SK-N-SH (cell line): ENCODE measurements at regions of chr9 and their contacts with region 1.

Region 1: GRCh38 chr9:113682297-113682771 is 193.8 kb upstream of the ZNF618 start:
- DNase-seq: peak; percentile 68
- H3K4me3 ChIP-seq: no peak overlapping the region; a peak in 1 of 4 replicates
- H3K27ac ChIP-seq: no peak overlapping the region
- H3K4me1 ChIP-seq: peaks cover 0 to 2% of the 10 kb centered on the region in 2 experiments; a peak in 1 of 4 replicates
- H3K27me3 ChIP-seq: peaks cover 8% of the 10 kb centered on the region; the same call in 1 of the 2 replicates
- CTCF ChIP-seq: peak; percentile 91
- EP300 ChIP-seq: no peak
- RAD21 ChIP-seq: peak; percentile 71

Region 2: GRCh38 chr9:113548221-113549041 is 133.9 kb before region 1 on chr9:
- CTCF ChIA-PET with region 1: no interaction called
- POLR2A ChIA-PET with region 1: no interaction called
- DNase-seq: no peak
- H3K4me3 ChIP-seq: no peak overlapping the region
- H3K27ac ChIP-seq: peak overlapping the region in 1 of 2 experiments; percentile 2; a peak in 1 of 4 replicates
- H3K4me1 ChIP-seq: peaks cover 0 to 25% of the 10 kb centered on the region in 2 experiments; a peak in 1 of 4 replicates
- H3K27me3 ChIP-seq: no peaks in the 10 kb centered on the region
- CTCF ChIP-seq: no peak
- EP300 ChIP-seq: no peak
- RAD21 ChIP-seq: no peak

Region 3: DNA sequence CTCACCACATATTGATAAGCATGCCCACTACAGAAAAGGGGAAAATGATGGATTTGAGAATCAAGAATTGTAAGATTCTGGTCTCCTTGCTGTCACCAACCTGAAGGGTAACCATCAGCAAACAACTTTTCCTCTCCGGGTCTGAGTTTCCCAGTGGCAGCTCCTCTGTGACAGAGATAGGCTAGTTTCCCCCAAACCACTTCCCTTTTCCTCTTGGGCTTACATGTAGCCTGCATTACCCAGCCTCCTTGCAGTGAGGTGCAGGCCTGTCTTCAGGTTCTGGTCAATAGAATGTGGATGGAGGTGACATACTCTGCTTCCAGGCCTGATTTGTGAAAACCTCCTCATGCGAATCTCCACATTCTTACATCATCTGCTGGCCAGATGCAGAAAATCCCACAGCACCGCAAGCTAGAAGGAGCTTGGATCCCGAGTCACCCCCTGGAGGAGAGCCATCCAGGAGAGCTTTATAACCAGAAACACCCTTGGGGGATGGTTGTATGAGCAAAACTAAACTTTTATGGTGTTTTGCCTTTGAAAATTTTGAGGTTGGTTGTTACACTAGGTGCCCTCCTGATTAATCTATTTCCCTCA is 12.7 kb before region 1 on chr9:
- CTCF ChIA-PET with region 1: interaction called, 16 read pairs
- POLR2A ChIA-PET with region 1: no interaction called
- DNase-seq: no peak
- H3K4me3 ChIP-seq: no peak overlapping the region
- H3K27ac ChIP-seq: no peak overlapping the region
- H3K4me1 ChIP-seq: peaks cover 3 to 13% of the 10 kb centered on the region in 2 experiments
- H3K27me3 ChIP-seq: no peaks in the 10 kb centered on the region
- CTCF ChIP-seq: no peak
- EP300 ChIP-seq: no peak
- RAD21 ChIP-seq: no peak

Region 4: DNA sequence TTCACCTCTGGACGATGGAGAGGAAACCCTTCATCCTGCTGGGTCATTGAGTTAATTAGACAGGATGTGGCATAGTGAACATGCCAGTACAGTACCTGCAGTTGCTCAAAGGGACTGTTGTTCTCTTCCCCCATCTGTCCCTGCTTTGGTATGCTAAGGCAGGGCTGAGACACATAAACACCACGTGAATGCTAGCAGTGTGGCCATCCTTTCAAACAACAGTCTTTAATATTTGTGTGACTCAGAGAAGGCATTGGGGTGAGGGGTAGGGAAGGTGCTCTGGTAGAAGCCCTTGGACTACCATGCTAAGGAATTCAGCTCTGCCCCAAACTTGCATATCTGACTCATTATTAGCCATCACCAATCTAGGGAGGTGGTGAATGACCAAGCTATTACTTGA is 13.6 kb after region 1 on chr9:
- CTCF ChIA-PET with region 1: interaction called, 18 read pairs
- POLR2A ChIA-PET with region 1: no interaction called
- DNase-seq: no peak
- H3K4me3 ChIP-seq: no peak overlapping the region
- H3K27ac ChIP-seq: no peak overlapping the region
- H3K4me1 ChIP-seq: no peaks in the 10 kb centered on the region; a peak in 1 of 4 replicates
- H3K27me3 ChIP-seq: no peaks in the 10 kb centered on the region; the same call in 1 of the 2 replicates
- CTCF ChIP-seq: no peak
- EP300 ChIP-seq: no peak
- RAD21 ChIP-seq: no peak